Activated naive CD8-positive, alpha-beta T cell treated with anti-CD3 and anti-CD28 coated beads, Interleukin-2, amount 10 ng/mL, durations not matched to agents 7 days and 5 days (primary cell): ENCODE measurements at regions of chr16 and their contacts with region 1.

Region 1: DNA sequence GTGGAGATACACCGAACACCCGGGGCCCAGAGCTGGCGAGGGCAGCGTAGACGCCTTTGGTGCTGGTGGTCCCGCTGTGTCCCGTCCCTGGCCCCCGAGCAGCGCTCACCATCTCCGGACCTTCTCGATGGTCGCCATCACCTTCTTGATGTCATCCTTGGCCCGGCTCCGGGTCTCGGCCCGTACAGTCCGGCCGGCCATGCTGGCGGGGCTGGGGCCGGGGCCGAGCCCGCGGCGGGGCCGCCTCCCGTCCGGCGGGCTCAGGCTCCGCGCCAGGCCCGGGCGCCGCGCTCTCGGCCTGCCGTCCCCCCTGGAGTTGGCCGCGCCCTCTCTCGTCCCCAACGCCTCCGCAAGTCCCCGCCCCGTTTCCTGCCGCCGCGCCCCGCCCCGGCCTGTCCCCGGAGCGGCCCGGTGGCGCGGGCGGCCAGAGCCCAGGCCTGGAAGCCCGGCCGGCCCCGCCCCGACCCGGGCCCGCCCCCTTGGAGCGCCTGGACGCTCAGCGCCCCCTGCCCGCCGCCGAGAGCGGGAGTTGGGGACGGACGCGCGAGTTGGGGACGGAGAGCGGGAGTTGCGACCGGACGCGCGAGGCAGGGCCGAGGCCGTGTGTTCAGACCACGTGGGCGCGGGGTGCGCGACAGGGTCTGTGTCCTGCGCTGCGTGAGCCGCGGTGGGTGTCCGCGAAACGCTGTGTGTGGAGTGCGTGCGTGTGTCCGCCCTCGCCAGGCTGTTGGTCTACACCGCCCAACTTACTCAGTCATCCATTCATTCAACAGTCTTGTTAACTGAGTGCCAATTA is at the start of gene BCL7C:
- DNase-seq: peak; percentile 87
- ATAC-seq: peak; percentile 82
- H3K4me3 Mint-ChIP-seq: peak within 1 kb of the TSS; percentile 94
- H3K27ac Mint-ChIP-seq: peak within 1 kb of the TSS; percentile 89
- H3K4me1 Mint-ChIP-seq: peaks cover 28% of the 10 kb centered on the region
- H3K27me3 Mint-ChIP-seq: no peaks in the 10 kb centered on the region
- total RNA-seq, gene BCL7C: 31.1 to 31.8 TPM

Region 2: DNA sequence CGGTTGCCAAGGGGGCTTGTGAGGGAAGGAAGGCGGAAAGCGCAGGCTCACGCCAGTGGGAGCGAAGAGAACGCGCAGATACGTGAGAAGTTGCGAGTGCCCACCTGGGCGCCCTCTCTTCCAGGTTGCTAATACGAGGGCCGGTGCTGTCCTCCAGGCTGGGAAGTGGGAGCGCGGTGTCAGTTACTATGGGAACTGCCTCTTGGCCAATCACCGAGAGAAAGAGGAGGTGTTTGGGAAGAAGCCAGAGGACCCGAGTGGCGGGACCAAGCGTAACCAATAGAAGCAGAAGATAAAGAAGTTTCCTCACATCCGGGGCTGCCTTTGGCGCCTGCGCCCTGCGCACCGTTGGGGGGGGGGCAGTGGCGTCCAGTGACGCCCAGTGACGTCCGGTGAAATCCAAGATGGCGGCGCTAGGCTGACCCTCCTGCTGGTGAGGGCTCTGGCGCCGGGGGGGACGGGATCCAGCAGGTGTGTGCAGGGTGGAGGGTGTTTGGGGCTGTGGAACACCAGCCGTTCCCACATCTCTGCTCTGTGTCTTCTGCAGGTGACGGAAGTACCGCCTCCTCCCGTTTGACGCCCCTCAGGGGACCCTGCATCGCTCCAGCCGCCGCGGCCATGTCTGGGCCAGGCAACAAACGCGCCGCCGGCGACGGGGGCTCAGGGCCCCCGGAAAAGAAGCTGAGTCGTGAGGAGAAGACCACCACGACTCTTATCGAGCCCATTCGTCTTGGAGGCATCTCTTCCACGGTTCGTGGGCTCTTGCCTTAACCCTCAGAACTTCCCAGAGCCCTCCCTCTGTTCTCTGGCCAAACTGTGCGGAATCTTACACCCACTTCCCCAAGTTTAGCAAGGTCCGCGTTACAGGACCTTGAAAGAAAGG is 131.8 kb before region 1 on chr16 and contains the starts of genes CFAP119 and RNF40:
- POLR2A ChIA-PET with region 1: interaction called, 10 read pairs
- DNase-seq: peak; percentile 91
- ATAC-seq: peak; percentile 96
- H3K4me3 Mint-ChIP-seq: peak within 1 kb of the TSS; percentile 95
- H3K27ac Mint-ChIP-seq: peak within 1 kb of the TSS; percentile 88
- H3K4me1 Mint-ChIP-seq: peaks cover 17% of the 10 kb centered on the region
- H3K27me3 Mint-ChIP-seq: no peaks in the 10 kb centered on the region
- total RNA-seq, gene CFAP119: 4.4 TPM
- total RNA-seq, gene RNF40: 94.7 to 105 TPM

Region 3: DNA sequence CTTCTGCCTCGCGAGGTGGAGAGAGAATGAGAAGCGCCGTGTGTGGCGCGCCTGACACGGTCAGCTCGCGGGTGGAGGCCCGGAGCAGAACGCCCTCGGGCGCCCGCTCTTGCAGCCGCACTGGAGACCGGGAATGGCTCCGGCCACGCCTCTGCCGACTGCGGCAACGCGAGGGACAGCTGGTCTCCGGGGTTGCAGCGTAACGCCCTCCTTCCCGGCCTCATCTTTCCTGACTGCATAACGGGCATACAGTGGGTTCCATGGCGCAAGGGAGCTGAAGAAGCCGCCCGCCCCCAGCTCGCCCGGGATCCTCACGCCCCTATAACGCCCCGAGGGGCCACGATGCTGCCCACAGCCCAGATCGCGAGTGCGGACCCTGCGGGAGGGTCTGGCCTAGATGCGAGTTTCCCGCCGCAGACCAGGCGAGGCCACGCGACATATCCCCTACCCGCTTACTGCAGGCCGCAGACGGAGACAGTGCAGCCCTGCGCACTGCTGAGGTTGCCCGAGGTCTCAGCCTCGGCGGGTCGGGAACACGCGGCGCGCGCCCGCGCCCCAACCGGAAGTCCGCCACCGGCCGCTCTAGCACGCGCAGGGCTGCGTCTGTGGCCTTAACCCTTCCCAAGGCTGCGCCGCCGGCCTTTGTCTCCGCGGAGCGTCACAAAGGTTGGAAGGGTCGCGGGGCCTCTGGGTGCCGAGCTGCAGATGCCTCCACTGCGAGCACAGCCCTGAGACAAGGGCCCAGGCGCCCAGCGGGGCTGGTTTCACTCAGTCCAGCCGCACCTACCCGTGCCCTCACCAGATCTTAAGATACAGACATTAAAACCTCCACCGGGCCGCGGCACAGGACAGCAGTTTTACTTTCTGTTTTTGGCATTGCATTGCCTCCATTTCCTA is 18.9 kb before region 1 on chr16:
- POLR2A ChIA-PET with region 1: interaction called, 44 read pairs
- DNase-seq: peak; percentile 93
- ATAC-seq: peak; percentile 88
- H3K4me3 Mint-ChIP-seq: peak overlapping the region; percentile 98
- H3K27ac Mint-ChIP-seq: peak overlapping the region; percentile 94
- H3K4me1 Mint-ChIP-seq: peaks cover 16% of the 10 kb centered on the region
- H3K27me3 Mint-ChIP-seq: no peaks in the 10 kb centered on the region